ENCODE measurements at regions of chr22 and their contacts with region 1.

Region 1: GRCh38 chr22:36454916-36455570 is 26.4 kb downstream of the TXN2 start:
- DNase-seq: peak; percentile 96 to 98
- H3K4me3 ChIP-seq: peak overlapping the region; percentile 36
- H3K4me3 Mint-ChIP-seq: peak overlapping the region; percentile 62
- H3K27ac Mint-ChIP-seq: peak overlapping the region; percentile 87
- H3K4me1 ChIP-seq: peaks cover 41% of the 10 kb centered on the region
- H3K4me1 Mint-ChIP-seq: peaks cover 23% of the 10 kb centered on the region
- H3K27me3 ChIP-seq: no peaks in the 10 kb centered on the region
- H3K27me3 Mint-ChIP-seq: no peaks in the 10 kb centered on the region
- CTCF ChIP-seq: peak in 1 of 2 experiments; percentile 2

Region 2: DNA sequence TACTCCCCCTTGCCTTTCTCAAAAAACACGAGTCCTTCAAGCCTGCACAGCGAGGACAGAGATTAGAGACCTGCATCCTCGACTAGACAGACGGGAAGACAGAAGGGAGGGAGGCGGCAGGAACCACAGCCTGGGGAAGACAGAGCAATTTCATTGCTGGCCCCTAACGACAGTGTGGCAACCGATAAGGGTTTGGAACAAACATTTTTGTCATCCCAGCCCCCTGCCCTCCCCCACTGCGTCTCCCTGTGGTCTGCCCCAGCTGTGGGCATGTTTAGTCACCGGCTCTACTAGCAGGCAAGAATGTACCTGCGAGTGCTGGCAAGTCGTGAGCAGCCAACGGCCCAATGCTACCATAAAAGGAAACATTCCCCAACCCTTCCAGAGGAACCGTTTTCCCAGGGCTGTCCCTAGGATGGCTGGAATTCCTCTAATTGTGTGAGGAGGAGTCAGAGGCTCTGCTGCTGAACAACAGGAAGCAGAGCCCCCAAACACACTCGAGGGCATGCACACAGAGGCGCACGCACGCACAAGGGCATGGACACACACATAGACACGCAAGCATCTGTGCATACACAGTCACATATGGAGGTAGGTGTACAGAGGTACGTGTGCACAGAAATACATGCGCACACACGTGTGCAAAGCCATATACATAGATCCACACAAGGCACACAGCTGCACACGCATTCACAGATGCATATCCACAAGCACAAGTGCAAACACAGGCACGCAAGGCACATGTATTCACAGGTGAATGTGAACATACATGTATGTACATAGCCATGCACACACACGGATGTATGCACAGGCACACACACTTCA is 125.6 kb before region 1 on chr22:
- CTCF ChIA-PET with region 1: no interaction called
- POLR2A ChIA-PET with region 1: no interaction called
- intact Hi-C with region 1: loop called (anchors 1 kb)
- DNase-seq: peak; percentile 89 to 94
- H3K4me3 ChIP-seq: no peak overlapping the region
- H3K4me3 Mint-ChIP-seq: peak overlapping the region; percentile 51
- H3K27ac Mint-ChIP-seq: peak overlapping the region; percentile 95
- H3K4me1 ChIP-seq: peaks cover 62% of the 10 kb centered on the region
- H3K4me1 Mint-ChIP-seq: peaks cover 64% of the 10 kb centered on the region
- H3K27me3 ChIP-seq: no peaks in the 10 kb centered on the region
- H3K27me3 Mint-ChIP-seq: no peaks in the 10 kb centered on the region
- CTCF ChIP-seq: no peak

Region 3: GRCh38 chr22:36362932-36363331 is 92.1 kb before region 1 on chr22:
- CTCF ChIA-PET with region 1: no interaction called
- POLR2A ChIA-PET with region 1: interaction called, 3 read pairs
- intact Hi-C with region 1: loop called (anchors 5 kb)
- DNase-seq: no peak
- H3K4me3 ChIP-seq: no peak overlapping the region
- H3K4me3 Mint-ChIP-seq: peak overlapping the region; percentile 61
- H3K27ac Mint-ChIP-seq: peak overlapping the region; percentile 94
- H3K4me1 ChIP-seq: peaks cover 95% of the 10 kb centered on the region
- H3K4me1 Mint-ChIP-seq: peaks cover 66% of the 10 kb centered on the region
- H3K27me3 ChIP-seq: no peaks in the 10 kb centered on the region
- H3K27me3 Mint-ChIP-seq: no peaks in the 10 kb centered on the region
- CTCF ChIP-seq: no peak

Region 4: GRCh38 chr22:36409911-36410756 is 44.9 kb before region 1 on chr22:
- CTCF ChIA-PET with region 1: no interaction called
- POLR2A ChIA-PET with region 1: interaction called, 4 read pairs
- intact Hi-C with region 1: loop called (anchors 2 kb)
- DNase-seq: peak; percentile 98 to 99
- H3K4me3 ChIP-seq: peak overlapping the region; percentile 45
- H3K4me3 Mint-ChIP-seq: peak overlapping the region; percentile 69
- H3K27ac Mint-ChIP-seq: peak overlapping the region; percentile 90
- H3K4me1 ChIP-seq: peaks cover 21% of the 10 kb centered on the region
- H3K4me1 Mint-ChIP-seq: peaks cover 13% of the 10 kb centered on the region
- H3K27me3 ChIP-seq: no peaks in the 10 kb centered on the region
- H3K27me3 Mint-ChIP-seq: no peaks in the 10 kb centered on the region
- CTCF ChIP-seq: peak; percentile 10 to 11

Region 5: DNA sequence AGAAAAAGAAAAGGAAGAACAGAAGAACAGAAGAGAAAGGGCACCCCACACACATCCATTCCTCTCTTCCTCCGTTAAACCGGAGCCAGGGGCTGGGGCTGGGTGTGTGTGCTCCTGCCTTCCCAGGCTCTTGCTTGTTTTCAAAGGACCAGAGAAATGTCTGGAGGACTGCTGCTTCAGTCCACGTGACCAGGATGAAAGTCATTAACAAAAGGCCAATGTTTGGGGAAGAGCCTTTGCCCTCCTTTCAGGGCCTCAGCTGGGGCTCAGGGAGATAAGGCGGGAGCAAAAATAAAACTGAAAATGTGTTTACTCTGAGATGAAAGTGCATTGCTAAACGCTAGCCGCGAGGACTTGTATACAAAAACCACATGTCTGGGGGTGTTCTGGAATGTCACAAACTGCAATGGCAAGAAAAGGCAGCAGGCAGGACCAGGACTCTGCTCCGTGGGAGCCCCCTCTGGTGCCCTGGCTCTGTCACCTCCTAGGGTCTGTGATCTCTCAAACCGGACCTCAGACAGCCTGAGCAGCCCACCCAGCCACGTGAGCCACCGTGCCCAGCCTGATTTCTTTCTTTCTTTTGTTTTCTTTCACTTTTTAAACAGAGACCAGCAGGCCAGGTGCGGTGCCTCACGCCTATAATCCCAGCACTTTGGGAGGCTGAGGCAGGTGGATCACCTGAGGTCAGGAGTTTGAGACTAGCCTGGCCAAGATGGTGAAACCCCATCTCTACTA is 35.7 kb before region 1 on chr22:
- CTCF ChIA-PET with region 1: interaction called, 3 read pairs
- POLR2A ChIA-PET with region 1: no interaction called
- intact Hi-C with region 1: loop called (anchors 1 kb)
- DNase-seq: peak; percentile 91 to 92
- H3K4me3 ChIP-seq: peak overlapping the region; percentile 25
- H3K4me3 Mint-ChIP-seq: peak overlapping the region; percentile 70
- H3K27ac Mint-ChIP-seq: peak overlapping the region; percentile 91
- H3K4me1 ChIP-seq: peaks cover 41% of the 10 kb centered on the region
- H3K4me1 Mint-ChIP-seq: peaks cover under 1% of the 10 kb centered on the region
- H3K27me3 ChIP-seq: no peaks in the 10 kb centered on the region
- H3K27me3 Mint-ChIP-seq: no peaks in the 10 kb centered on the region
- CTCF ChIP-seq: no peak

Region 6: DNA sequence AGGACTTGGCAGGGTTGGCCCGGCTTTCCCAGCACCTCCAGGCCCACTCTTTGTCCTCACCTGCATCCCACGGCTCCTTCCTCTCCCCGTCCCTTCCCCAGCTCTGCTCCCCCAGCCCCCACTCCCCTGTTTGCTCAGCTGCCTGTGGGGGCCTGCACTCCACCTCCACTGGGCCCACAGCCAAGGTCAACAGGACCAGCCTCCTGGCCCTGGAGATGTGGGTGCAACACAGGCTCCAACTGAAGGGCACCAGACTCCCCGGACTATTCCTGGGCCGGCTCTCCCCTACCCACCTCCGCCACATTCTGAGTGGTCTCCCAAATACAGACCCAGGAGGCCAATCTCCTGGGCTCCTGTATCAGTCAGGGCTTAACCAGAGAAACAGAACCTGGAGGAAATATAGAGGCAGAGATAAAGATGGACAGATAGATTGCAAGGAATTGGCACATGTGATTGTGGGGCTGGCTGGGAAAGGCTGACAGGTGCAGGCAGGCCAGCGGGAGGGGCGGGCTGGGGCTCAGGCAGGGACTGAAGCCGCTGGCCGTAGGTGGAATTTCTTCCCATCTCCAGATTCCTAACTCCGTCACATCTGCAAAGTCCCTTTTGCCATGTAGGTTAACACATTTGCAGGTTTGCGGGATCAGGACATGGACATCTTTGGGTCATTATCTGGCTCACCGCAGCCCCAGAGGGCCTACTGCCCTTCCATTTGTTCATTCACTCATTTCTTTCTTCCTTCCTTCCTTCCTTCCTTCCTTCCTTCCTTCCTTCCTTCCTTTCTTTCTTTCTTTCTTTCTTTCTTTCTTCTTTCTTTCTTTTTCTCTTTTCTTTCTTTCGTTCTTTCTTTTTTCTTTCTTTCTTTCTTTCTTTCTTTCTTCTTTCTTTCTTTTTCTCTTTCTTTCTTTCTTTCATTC is 21.5 kb before region 1 on chr22:
- CTCF ChIA-PET with region 1: no interaction called
- POLR2A ChIA-PET with region 1: no interaction called
- intact Hi-C with region 1: loop called (anchors 1 kb)
- DNase-seq: peak in 1 of 2 experiments; percentile 53
- H3K4me3 ChIP-seq: no peak overlapping the region
- H3K4me3 Mint-ChIP-seq: peak overlapping the region; percentile 50
- H3K27ac Mint-ChIP-seq: peak overlapping the region; percentile 73
- H3K4me1 ChIP-seq: peaks cover 55% of the 10 kb centered on the region
- H3K4me1 Mint-ChIP-seq: peaks cover 38% of the 10 kb centered on the region
- H3K27me3 ChIP-seq: no peaks in the 10 kb centered on the region
- H3K27me3 Mint-ChIP-seq: no peaks in the 10 kb centered on the region
- CTCF ChIP-seq: no peak

Measured in Caco-2 (cell line).